MCF 10A (cell line): ENCODE measurements at regions of chr4 and their contacts with region 1.

Region 1: GRCh38 chr4:112031712-112032328 is 113.4 kb upstream of the FAM241A start:
- DNase-seq: peak; percentile 66
- H3K4me3 Mint-ChIP-seq: no peak overlapping the region
- H3K27ac Mint-ChIP-seq: no peak overlapping the region
- H3K4me1 Mint-ChIP-seq: no peaks in the 10 kb centered on the region
- H3K27me3 Mint-ChIP-seq: peaks cover 72% of the 10 kb centered on the region
- CTCF ChIP-seq: peak; percentile 73

Region 2: GRCh38 chr4:111136438-111136837 is 895.4 kb before region 1 on chr4:
- CTCF ChIA-PET with region 1: interaction called, 15 read pairs
- POLR2A ChIA-PET with region 1: no interaction called
- intact Hi-C with region 1: no loop called
- DNase-seq: peak; percentile 37
- H3K4me3 Mint-ChIP-seq: no peak overlapping the region
- H3K27ac Mint-ChIP-seq: no peak overlapping the region
- H3K4me1 Mint-ChIP-seq: no peaks in the 10 kb centered on the region
- H3K27me3 Mint-ChIP-seq: no peaks in the 10 kb centered on the region
- CTCF ChIP-seq: peak; percentile 34

Region 3: GRCh38 chr4:111641955-111642579 is 389.8 kb before region 1 on chr4:
- CTCF ChIA-PET with region 1: interaction called, 9 read pairs
- POLR2A ChIA-PET with region 1: no interaction called
- intact Hi-C with region 1: loop called (anchors 1 kb)
- DNase-seq: peak; percentile 91
- H3K4me3 Mint-ChIP-seq: no peak overlapping the region
- H3K27ac Mint-ChIP-seq: no peak overlapping the region
- H3K4me1 Mint-ChIP-seq: peaks cover 8% of the 10 kb centered on the region
- H3K27me3 Mint-ChIP-seq: peaks cover 4% of the 10 kb centered on the region
- CTCF ChIP-seq: peak; percentile 82

Region 4: DNA sequence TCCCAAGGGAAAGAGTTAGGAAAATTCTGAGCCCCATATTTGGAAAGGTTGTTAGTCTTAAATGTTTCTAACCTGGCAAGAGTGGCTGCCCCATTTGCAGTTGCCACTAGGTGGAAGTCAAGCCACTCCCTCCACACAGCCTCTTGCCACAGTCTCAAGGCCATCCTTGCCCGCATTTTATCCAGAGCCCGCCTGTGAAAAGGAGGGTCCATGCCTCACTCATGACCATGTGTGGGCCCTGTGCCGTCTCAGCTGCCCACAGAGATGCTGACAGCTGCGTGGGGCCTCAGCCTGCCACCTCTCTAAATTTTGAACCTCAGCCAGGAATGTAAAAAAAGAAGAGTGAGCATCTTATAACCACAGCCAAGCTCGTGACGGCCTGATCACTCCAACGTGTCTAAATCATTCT is 88.0 kb before region 1 on chr4:
- CTCF ChIA-PET with region 1: interaction called, 55 read pairs
- POLR2A ChIA-PET with region 1: no interaction called
- intact Hi-C with region 1: loop called (anchors 1 kb)
- DNase-seq: peak; percentile 68
- H3K4me3 Mint-ChIP-seq: no peak overlapping the region
- H3K27ac Mint-ChIP-seq: no peak overlapping the region
- H3K4me1 Mint-ChIP-seq: no peaks in the 10 kb centered on the region
- H3K27me3 Mint-ChIP-seq: peaks cover 27% of the 10 kb centered on the region
- CTCF ChIP-seq: peak; percentile 47